ENCODE measurements at regions of chr5 and their contacts with region 1.

Region 1: GRCh38 chr5:153147891-153148623 is 342.4 kb upstream of the GRIA1 start:
- H3K4me3 ChIP-seq: no peak overlapping the region
- H3K27ac ChIP-seq: no peak overlapping the region
- H3K4me1 ChIP-seq: no peaks in the 10 kb centered on the region
- CTCF ChIP-seq: 0 out of 2 replicates have a peak, but pooled peaks have one; percentile 19

Region 2: DNA sequence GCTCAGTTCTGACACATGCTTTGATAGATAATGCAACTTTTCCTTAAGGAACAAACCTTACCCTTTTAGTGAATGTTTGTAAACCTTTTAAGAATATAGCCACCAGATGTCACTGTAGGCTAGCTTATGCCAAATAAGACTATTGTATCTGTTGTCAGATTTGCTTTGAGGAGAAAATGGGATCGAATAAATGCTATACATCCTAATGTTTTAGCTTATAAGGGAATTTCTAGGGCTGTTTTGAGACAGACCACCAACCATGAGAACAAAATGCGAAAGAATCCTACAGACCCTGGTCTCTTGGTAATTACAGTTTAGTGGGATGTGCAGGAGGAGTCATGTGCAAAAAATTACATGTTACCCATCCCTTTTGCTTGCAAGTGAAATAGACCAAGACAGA is 615.3 kb before region 1 on chr5:
- CTCF ChIA-PET with region 1: interaction called, 25 read pairs
- POLR2A ChIA-PET with region 1: no interaction called
- H3K4me3 ChIP-seq: no peak overlapping the region
- H3K27ac ChIP-seq: no peak overlapping the region
- H3K4me1 ChIP-seq: no peaks in the 10 kb centered on the region
- CTCF ChIP-seq: peak; percentile 34; the same call in 1 of the 2 replicates

Region 3: GRCh38 chr5:152560512-152561137 is 587.4 kb before region 1 on chr5:
- CTCF ChIA-PET with region 1: interaction called, 12 read pairs
- POLR2A ChIA-PET with region 1: no interaction called
- H3K4me3 ChIP-seq: no peak overlapping the region
- H3K27ac ChIP-seq: no peak overlapping the region
- H3K4me1 ChIP-seq: no peaks in the 10 kb centered on the region
- CTCF ChIP-seq: no peak

Measured in HEK293 (cell line).